Ovary (tissue), 10 donors: ENCODE measurements at regions of chr3 and their contacts with region 1.

Region 1: GRCh38 chr3:123449102-123449996 is 459 bp upstream of the ADCY5 start:
- DNase-seq: peak; percentile 46 to 71 (median 67)
- H3K4me3 ChIP-seq: peak overlapping the region; percentile 75
- H3K27ac ChIP-seq: peak overlapping the region; percentile 91 to 95
- H3K4me1 ChIP-seq: peaks cover 16% of the 10 kb centered on the region
- H3K27me3 ChIP-seq: no peaks in the 10 kb centered on the region
- CTCF ChIP-seq: no peak
- EP300 ChIP-seq: no peak
- POLR2A ChIP-seq: peak; percentile 18

Region 2: GRCh38 chr3:122427857-122428471 is 1021.4 kb before region 1 on chr3:
- intact Hi-C with region 1: no loop called
- DNase-seq: no peak
- H3K4me3 ChIP-seq: no peak overlapping the region
- H3K27ac ChIP-seq: no peak overlapping the region
- H3K4me1 ChIP-seq: no peaks in the 10 kb centered on the region
- H3K27me3 ChIP-seq: no peaks in the 10 kb centered on the region
- CTCF ChIP-seq: no peak
- EP300 ChIP-seq: no peak
- POLR2A ChIP-seq: no peak

Region 3: DNA sequence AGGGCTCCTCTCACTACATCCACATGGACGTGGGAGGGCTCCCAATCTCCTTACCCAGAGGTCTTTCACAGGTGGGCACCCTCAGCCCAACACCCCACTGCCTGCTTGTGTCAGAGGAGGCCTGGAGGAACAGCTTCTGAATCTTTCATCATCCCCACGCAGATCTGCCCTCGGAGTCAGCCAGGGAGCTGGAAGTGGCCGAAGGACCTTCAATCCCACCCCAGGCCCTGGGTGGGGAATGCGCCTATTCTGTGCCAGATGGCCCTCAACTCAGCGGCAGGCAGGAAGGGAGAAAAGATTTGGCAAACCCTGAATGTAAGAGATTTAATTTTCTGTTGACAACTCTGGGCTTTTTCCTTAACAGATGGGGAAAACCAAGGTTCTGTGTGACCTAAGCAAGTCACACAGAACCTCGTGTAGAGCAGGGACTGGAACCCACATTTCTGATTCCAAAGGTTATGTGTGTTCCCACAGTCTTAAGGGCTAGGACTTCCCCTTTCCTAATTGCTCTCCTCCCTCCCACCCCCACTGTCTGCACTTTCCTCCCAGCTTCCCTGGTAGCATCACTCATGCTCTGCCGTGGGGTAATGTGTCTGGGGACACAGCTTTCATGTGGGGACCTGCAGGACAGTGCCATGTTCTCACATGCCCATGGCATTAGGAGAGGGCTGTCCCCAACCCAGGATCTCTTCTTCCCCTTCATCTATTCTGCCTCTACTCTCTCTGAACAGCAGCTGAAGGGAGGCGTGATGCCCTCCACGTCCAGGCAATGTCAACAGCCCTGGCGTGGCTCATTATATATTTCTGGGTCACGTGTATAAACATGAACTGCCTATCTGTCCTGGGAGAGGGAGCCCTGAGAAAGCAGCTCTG is 519.9 kb before region 1 on chr3:
- intact Hi-C with region 1: no loop called
- DNase-seq: no peak
- H3K4me3 ChIP-seq: no peak overlapping the region
- H3K27ac ChIP-seq: no peak overlapping the region
- H3K4me1 ChIP-seq: no peaks in the 10 kb centered on the region
- H3K27me3 ChIP-seq: no peaks in the 10 kb centered on the region
- CTCF ChIP-seq: no peak
- EP300 ChIP-seq: no peak
- POLR2A ChIP-seq: no peak

Region 4: DNA sequence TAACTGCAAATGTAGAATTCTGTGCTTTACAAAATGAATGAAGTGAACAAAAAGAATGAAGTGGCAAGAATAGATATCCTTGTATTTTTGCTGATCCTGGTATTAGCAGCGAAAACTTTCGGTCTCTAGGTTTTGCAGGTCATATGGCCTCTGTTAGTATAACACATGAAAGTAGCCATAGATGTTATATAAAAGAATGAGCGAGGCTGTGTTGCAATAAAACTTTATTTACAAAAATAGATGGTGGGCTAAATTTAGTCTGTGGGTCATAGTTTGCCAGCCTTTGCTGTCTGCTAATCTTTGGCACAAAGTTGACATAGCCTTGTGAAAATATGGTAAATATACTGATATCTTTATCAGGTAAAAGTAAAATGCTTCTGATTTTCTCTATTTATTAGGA is 212.4 kb before region 1 on chr3:
- intact Hi-C with region 1: no loop called
- DNase-seq: no peak
- H3K4me3 ChIP-seq: no peak overlapping the region
- H3K27ac ChIP-seq: no peak overlapping the region
- H3K4me1 ChIP-seq: no peaks in the 10 kb centered on the region
- H3K27me3 ChIP-seq: no peaks in the 10 kb centered on the region
- CTCF ChIP-seq: no peak
- EP300 ChIP-seq: no peak
- POLR2A ChIP-seq: no peak

Region 5: GRCh38 chr3:123352134-123352890 is 97.0 kb before region 1 on chr3:
- intact Hi-C with region 1: loop called in 1 of 4 experiments (anchors 10 kb)
- DNase-seq: peak in 1 of 5 donors; percentile 28
- H3K4me3 ChIP-seq: no peak overlapping the region
- H3K27ac ChIP-seq: no peak overlapping the region
- H3K4me1 ChIP-seq: peaks cover 10% of the 10 kb centered on the region
- H3K27me3 ChIP-seq: no peaks in the 10 kb centered on the region
- CTCF ChIP-seq: no peak
- EP300 ChIP-seq: no peak
- POLR2A ChIP-seq: no peak